Activated B cell treated with CpG ODN at 0.5 μM for 24 hours (primary cell): ENCODE measurements at regions of chr11 and their contacts with region 1.

Region 1: GRCh38 chr11:116683982-116684381 is 88.8 kb downstream of the BUD13 start:
- DNase-seq: no peak
- ATAC-seq: no peak
- H3K4me3 Mint-ChIP-seq: no peak overlapping the region
- H3K27ac Mint-ChIP-seq: no peak overlapping the region
- H3K4me1 Mint-ChIP-seq: no peaks in the 10 kb centered on the region
- H3K27me3 Mint-ChIP-seq: peaks cover 19% of the 10 kb centered on the region
- CTCF ChIP-seq: no peak

Region 2: DNA sequence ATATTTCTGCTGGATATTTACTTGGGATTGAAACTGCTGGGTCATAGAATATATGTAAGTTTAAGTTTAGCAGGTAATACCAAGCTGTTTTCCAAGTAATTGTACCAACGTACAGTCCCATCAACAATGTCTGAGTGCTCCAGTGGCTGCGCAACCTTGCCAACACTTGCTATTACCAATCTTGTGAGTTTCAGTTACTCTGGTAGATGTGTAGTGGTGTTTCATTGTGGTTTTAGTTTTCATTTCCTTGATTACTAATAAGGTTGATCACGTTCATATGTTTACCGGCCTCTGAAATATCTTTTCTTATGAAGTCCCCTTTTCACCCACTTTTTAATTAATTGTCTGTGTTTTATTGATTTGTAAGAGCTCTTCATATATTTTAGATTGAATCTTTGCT is 809.1 kb before region 1 on chr11:
- CTCF ChIA-PET with region 1: no interaction called
- POLR2A ChIA-PET with region 1: no interaction called
- intact Hi-C with region 1: no loop called
- DNase-seq: no peak
- ATAC-seq: no peak
- H3K4me3 Mint-ChIP-seq: no peak overlapping the region
- H3K27ac Mint-ChIP-seq: no peak overlapping the region
- H3K4me1 Mint-ChIP-seq: peaks cover 30% of the 10 kb centered on the region
- H3K27me3 Mint-ChIP-seq: no peaks in the 10 kb centered on the region
- CTCF ChIP-seq: no peak

Region 3: DNA sequence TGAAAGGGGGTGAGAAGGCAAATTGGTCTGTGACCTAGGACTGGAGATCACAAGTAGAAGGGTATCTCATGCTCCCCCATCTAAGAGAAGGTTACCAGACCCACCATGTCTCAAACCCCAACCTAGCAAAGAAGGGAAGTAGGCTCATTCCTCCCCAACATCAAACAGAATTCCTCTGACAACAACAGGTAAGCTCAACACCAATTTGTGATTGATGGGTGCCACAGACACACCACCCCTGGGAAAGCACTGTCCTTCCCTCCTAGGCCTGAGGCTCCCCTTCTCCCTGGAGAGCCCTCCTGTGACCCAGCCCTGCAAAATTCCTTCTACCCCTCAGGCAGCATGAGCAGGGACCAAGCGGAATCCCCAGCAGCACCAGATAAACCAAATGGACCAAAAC is 65.5 kb before region 1 on chr11:
- CTCF ChIA-PET with region 1: no interaction called
- POLR2A ChIA-PET with region 1: no interaction called
- intact Hi-C with region 1: loop called (anchors 2 kb)
- DNase-seq: no peak
- ATAC-seq: no peak
- H3K4me3 Mint-ChIP-seq: no peak overlapping the region
- H3K27ac Mint-ChIP-seq: no peak overlapping the region
- H3K4me1 Mint-ChIP-seq: no peaks in the 10 kb centered on the region
- H3K27me3 Mint-ChIP-seq: no peaks in the 10 kb centered on the region
- CTCF ChIP-seq: no peak

Region 4: GRCh38 chr11:116641561-116642045 is 42.4 kb before region 1 on chr11:
- CTCF ChIA-PET with region 1: no interaction called
- POLR2A ChIA-PET with region 1: no interaction called
- intact Hi-C with region 1: no loop called
- DNase-seq: no peak
- ATAC-seq: no peak
- H3K4me3 Mint-ChIP-seq: no peak overlapping the region
- H3K27ac Mint-ChIP-seq: no peak overlapping the region
- H3K4me1 Mint-ChIP-seq: no peaks in the 10 kb centered on the region
- H3K27me3 Mint-ChIP-seq: no peaks in the 10 kb centered on the region
- CTCF ChIP-seq: no peak